H1 (cell line): ENCODE measurements at regions of chr7 and their contacts with region 1.

Region 1: GRCh38 chr7:143299840-143300239 is 11.7 kb downstream of the CASP2 start:
- DNase-seq: peak in 1 of 2 experiments; percentile 77
- H3K4me3 ChIP-seq: no peak overlapping the region
- H3K27ac ChIP-seq: no peak overlapping the region
- H3K4me1 ChIP-seq: no peaks in the 10 kb centered on the region
- H3K27me3 ChIP-seq: no peaks in the 10 kb centered on the region
- CTCF ChIP-seq: peak; percentile 74 to 96 (median 91)
- EP300 ChIP-seq: no peak
- POLR2A ChIP-seq: no peak
- RAD21 ChIP-seq: peak; percentile 47 to 60

Region 2: DNA sequence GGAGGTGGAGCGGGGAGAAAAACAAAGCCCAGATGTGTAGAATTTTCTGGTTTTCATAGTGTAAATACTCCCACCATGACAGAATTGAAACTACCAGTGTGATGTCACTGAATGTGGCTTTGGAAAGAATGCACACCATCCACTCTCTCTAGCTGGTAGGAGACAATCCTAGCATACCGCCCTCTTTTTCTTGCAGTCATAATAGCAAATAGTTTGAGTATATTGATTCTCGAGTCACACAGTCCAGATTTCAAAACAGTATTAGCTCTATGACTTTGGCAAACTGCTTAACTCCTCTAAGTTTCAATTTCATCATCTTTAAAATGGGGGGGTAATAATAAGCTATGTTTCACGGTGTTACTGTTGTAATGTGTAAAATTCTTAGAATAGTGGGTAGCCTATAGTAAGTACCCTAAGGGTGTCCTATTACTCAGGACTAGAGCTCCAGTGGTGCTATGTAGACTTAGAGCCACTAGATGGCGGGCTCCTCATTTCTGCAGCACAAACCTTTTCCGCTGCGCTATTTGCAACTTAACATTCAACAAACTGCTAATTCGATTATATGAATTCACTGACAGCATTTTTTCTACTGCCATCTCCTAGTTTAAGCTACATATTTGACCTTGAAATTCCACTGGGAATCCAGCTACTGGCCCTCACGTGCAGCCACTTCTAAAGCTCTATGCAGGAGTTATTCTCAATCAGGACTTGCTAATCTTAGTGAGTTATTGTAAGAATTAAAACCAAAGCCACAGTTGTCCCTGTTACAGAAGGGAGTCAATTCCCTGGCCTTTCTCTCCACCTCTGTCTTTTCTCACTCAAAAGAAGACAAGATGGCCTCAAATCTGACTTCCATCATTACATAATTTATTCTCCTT is 59.3 kb before region 1 on chr7:
- CTCF ChIA-PET with region 1: interaction called, 91 read pairs
- POLR2A ChIA-PET with region 1: no interaction called
- DNase-seq: peak in 1 of 2 experiments; percentile 58
- H3K4me3 ChIP-seq: no peak overlapping the region
- H3K27ac ChIP-seq: no peak overlapping the region
- H3K4me1 ChIP-seq: no peaks in the 10 kb centered on the region
- H3K27me3 ChIP-seq: no peaks in the 10 kb centered on the region; a peak in 1 of 7 replicates
- CTCF ChIP-seq: peak; percentile 15 to 85 (median 83)
- EP300 ChIP-seq: no peak
- POLR2A ChIP-seq: no peak
- RAD21 ChIP-seq: peak; percentile 87 to 92

Region 3: GRCh38 chr7:143263266-143264195 is 36.3 kb before region 1 on chr7 and contains the start of gene GSTK1:
- CTCF ChIA-PET with region 1: interaction called, 17 read pairs
- POLR2A ChIA-PET with region 1: no interaction called
- DNase-seq: peak in 1 of 2 experiments; percentile 87
- H3K4me3 ChIP-seq: peak within 1 kb of the TSS; percentile 60 to 99 (median 80)
- H3K27ac ChIP-seq: no peak within 1 kb of the TSS
- H3K4me1 ChIP-seq: peaks cover 0 to 4% (median 0%) of the 10 kb centered on the region in 4 experiments; a peak in 2 of 7 replicates
- H3K27me3 ChIP-seq: peaks cover 0 to 3% (median 0%) of the 10 kb centered on the region in 4 experiments; a peak in 3 of 7 replicates
- CTCF ChIP-seq: no peak
- EP300 ChIP-seq: no peak
- POLR2A ChIP-seq: peak in 1 of 2 experiments; percentile 59; a peak in 2 of 3 replicates
- RAD21 ChIP-seq: no peak
- total RNA-seq, gene GSTK1: 25.5 and 26.2 TPM in 2 replicates

Region 4: GRCh38 chr7:143287935-143288826 is 11.7 kb before region 1 on chr7 and contains the start of gene CASP2:
- CTCF ChIA-PET with region 1: interaction called, 85 read pairs
- POLR2A ChIA-PET with region 1: interaction called, 10 read pairs
- DNase-seq: peak; percentile 94 to 98
- H3K4me3 ChIP-seq: peak within 1 kb of the TSS; percentile 81 to 96 (median 90)
- H3K27ac ChIP-seq: peak within 1 kb of the TSS; percentile 89
- H3K4me1 ChIP-seq: peaks cover 9 to 14% (median 10%) of the 10 kb centered on the region in 4 experiments
- H3K27me3 ChIP-seq: peaks cover 10 to 21% (median 20%) of the 10 kb centered on the region in 4 experiments
- CTCF ChIP-seq: peak in 2 of 3 experiments; percentile 17 to 21; a peak in 3 of 4 replicates
- EP300 ChIP-seq: no peak
- POLR2A ChIP-seq: peak; percentile 88 to 91
- RAD21 ChIP-seq: no peak
- total RNA-seq, gene CASP2: 32.8 and 35.3 TPM in 2 replicates

Region 5: GRCh38 chr7:143408686-143409561 is 109.1 kb after region 1 on chr7 and contains the start of gene EPHA1:
- CTCF ChIA-PET with region 1: interaction called, 53 read pairs
- POLR2A ChIA-PET with region 1: no interaction called
- DNase-seq: peak; percentile 50 to 83
- H3K4me3 ChIP-seq: peak within 1 kb of the TSS; percentile 86 to 91 (median 88)
- H3K27ac ChIP-seq: peak within 1 kb of the TSS; percentile 71
- H3K4me1 ChIP-seq: peaks cover 18 to 42% (median 31%) of the 10 kb centered on the region in 4 experiments
- H3K27me3 ChIP-seq: no peaks in the 10 kb centered on the region
- CTCF ChIP-seq: peak; percentile 47 to 72 (median 58)
- EP300 ChIP-seq: peak in 1 of 2 experiments; percentile 39; a peak in 1 of 3 replicates
- POLR2A ChIP-seq: peak in 1 of 2 experiments; percentile 34; a peak in 1 of 3 replicates
- RAD21 ChIP-seq: peak; percentile 47 to 57
- total RNA-seq, gene EPHA1: 133 and 139 TPM in 2 replicates